ENCODE measurements at regions of chr9 and their contacts with region 1.

Region 1: GRCh38 chr9:19174127-19174912 is 47.0 kb upstream of the PLIN2 start:
- DNase-seq: peak; percentile 89 to 97 (median 93)
- H3K4me3 ChIP-seq: no peak overlapping the region
- H3K4me3 Mint-ChIP-seq: peak overlapping the region in 1 of 2 donors; percentile 43
- H3K27ac ChIP-seq: peak overlapping the region; percentile 10 to 79
- H3K27ac Mint-ChIP-seq: peak overlapping the region; percentile 77 to 91 (median 85)
- H3K4me1 ChIP-seq: peaks cover 26 to 35% of the 10 kb centered on the region in 2 donors
- H3K4me1 Mint-ChIP-seq: peaks cover 33% of the 10 kb centered on the region
- H3K27me3 ChIP-seq: no peaks in the 10 kb centered on the region
- H3K27me3 Mint-ChIP-seq: peaks cover 0 to 7% (median 2%) of the 10 kb centered on the region in 3 donors
- CTCF ChIP-seq: peak; percentile 84

Region 2: GRCh38 chr9:19127881-19128500 is 46.3 kb before region 1 on chr9:
- intact Hi-C with region 1: loop called in 1 of 2 experiments (anchors 5 kb)
- DNase-seq: peak in 2 of 3 donors; percentile 21 to 34
- H3K4me3 ChIP-seq: peak overlapping the region; percentile 66 to 95 (median 77)
- H3K4me3 Mint-ChIP-seq: peak overlapping the region; percentile 89 to 93
- H3K27ac ChIP-seq: peak overlapping the region; percentile 96 to 97
- H3K27ac Mint-ChIP-seq: peak overlapping the region; percentile 91 to 96 (median 95)
- H3K4me1 ChIP-seq: peaks cover 46 to 53% of the 10 kb centered on the region in 2 donors
- H3K4me1 Mint-ChIP-seq: peaks cover 51% of the 10 kb centered on the region
- H3K27me3 ChIP-seq: no peaks in the 10 kb centered on the region
- H3K27me3 Mint-ChIP-seq: peaks cover 0 to 6% (median 2%) of the 10 kb centered on the region in 3 donors
- CTCF ChIP-seq: no peak

Region 3: DNA sequence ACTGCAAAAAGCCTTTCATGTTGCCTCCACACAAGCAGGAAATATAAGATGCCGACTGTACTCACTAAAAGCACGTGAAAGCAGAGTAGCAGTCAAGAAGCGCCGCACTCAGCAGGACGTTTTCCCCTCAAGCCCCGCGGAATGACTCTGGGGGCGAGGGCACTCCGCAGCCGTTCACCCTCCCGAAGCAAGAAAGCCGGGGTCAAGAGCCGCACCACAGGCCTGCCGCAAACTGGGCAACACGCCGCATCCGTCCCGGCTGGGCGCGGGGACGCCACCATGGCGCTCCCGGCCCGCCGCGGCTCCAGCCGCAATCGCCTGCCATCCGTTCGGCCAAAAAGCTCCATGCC is 205.4 kb after region 1 on chr9:
- intact Hi-C with region 1: no loop called
- DNase-seq: peak in 1 of 3 donors; percentile 17
- H3K4me3 ChIP-seq: peak overlapping the region; percentile 53 to 94 (median 63)
- H3K4me3 Mint-ChIP-seq: peak overlapping the region; percentile 96 to 99
- H3K27ac ChIP-seq: peak overlapping the region; percentile 73 to 93
- H3K27ac Mint-ChIP-seq: peak overlapping the region; percentile 97 to 100 (median 99)
- H3K4me1 ChIP-seq: peaks cover 22 to 24% of the 10 kb centered on the region in 2 donors
- H3K4me1 Mint-ChIP-seq: peaks cover 32% of the 10 kb centered on the region
- H3K27me3 ChIP-seq: no peaks in the 10 kb centered on the region
- H3K27me3 Mint-ChIP-seq: peaks cover 0 to 4% (median 0%) of the 10 kb centered on the region in 3 donors
- CTCF ChIP-seq: no peak

Measured in CD14-positive monocyte (primary cell).